ENCODE measurements at regions of chr20 and their contacts with region 1.

Region 1: DNA sequence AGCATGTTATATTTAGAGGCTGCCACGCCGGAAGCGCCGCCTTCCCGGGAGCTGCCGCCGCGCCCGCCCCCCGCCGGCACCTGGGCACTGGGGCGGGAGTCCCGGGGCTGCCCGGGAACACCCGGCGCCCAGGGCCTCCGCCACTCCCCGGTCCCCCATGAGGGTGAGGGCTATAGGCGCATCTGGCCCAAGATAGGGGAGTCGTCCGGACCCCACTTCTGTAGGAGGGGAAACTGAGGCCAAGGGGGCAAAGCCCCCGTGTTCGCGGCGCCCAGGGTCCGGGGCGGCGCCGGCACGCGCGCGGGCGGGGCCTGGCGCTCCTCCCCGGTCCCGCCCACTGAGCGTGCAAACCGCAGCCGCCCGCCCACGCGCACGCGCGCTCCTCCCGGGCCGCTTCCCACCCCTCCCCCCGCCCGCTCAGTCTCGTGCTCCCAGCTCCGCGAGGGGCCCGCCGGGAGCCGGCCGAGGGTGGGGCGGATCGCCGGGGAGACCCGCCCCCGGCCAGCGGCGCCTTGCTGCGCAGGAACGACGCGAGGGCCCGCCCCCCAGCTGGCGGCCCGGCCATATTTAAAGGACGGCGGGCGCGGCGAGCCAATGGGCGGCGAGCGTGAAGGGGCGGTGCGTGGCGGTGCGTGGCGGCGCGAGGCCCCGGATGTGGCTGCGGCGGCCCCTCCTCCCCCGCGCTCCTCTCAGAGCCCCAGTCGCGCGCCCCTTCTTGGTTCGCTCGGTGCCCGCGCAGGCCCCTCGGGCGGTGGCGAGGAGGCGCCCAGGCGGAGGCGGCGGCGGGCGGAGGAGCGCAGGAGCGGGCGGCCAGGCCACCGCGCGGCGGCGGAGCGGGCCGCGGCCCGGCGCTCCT is at the start of gene LSM14B:
- DNase-seq: peak; percentile 98
- H3K4me3 ChIP-seq: peak within 1 kb of the TSS; percentile 76 to 89 (median 87)
- H3K27ac ChIP-seq: peak within 1 kb of the TSS; percentile 91 to 98 (median 97)
- H3K4me1 ChIP-seq: peaks cover 0 to 23% (median 21%) of the 10 kb centered on the region in 4 donors
- H3K27me3 ChIP-seq: peaks cover 0 to 19% (median 0%) of the 10 kb centered on the region in 3 donors
- CTCF ChIP-seq: no peak
- EP300 ChIP-seq: peak in 1 of 4 donors; percentile 25
- POLR2A ChIP-seq: no peak
- total RNA-seq, gene LSM14B: 20.8 to 28.5 (median 23.6) TPM

Region 2: DNA sequence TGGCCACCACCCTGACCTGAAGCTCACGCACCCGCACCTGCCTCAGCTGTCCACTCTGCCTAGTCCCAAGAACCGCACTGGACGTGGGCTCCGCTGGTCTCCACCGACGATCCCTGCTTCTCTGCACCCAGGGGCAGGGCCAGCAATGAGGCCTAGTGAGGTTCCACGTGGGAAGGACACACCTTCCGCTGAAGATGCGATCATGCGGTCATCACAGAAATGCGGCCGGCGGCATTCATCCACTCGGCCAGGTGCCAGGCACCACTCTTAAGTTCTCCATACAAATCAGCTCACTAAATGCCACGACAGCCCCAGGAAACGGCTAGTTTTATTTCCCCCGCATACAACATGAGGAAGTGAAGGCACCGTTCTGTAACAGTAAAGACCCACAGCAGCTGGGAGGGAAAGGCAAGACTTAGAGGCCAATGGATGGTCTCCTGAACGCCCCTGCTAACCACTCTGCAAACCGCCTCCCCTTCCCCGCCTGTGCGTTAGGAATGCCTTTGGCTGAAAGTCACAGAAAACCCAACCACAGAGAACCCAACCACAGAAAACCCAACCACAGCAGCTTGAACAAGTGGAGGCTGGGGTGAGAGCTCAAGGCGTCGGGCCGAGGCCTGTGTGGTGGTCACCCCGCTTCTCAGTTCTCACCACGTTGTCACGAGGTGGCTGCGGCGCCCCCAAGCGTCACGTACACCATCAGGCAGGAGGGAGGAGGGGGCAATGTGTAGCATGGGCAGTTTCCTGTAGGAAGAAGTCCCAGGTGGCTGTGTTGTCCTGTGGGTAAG is 260.8 kb before region 1 on chr20:
- intact Hi-C with region 1: no loop called
- DNase-seq: no peak
- H3K4me3 ChIP-seq: no peak overlapping the region
- H3K27ac ChIP-seq: no peak overlapping the region
- H3K4me1 ChIP-seq: no peaks in the 10 kb centered on the region
- H3K27me3 ChIP-seq: peaks cover 0 to 14% (median 0%) of the 10 kb centered on the region in 3 donors
- CTCF ChIP-seq: no peak
- EP300 ChIP-seq: no peak
- POLR2A ChIP-seq: no peak

Region 3: DNA sequence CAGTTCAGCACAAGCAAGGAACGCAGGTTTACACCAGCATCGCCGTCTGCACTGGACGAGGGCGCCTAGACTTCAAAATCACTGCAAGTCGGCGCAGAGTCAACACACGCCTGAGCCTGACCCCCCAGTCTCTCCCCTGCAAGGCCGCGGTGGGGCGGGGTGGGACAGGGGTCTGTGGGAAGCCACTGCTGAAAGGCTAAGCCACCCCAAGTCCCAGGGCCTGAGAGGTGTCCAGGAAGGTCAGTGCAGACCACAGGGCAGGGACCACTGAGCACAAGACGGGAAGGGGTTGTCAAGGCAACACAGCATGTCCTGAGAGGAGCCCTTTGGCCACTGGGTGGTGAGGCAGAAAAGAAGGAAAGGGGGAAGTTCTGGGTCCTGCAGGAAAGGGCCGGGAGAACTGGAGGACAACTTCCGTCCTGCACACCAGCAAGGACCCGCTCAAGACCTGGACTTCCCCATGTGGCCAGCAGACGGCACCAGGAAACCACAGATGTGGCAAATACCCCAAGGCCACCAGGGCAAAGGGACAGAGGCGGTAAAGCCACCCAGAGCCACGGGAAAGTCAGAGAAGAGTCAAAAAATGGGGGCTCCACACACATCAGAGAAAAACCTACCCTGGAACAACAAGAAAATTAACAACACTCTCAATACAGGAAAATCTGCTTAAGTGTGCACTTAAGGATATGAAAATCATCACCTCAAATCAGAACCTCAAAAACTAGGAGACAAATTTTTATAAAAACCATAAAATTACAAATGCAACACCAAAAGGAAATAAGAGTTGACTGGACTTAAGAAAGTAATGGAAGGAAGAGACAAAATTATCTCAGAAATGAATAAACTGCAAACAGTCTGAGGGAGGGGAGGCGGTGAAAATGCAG is 141.1 kb before region 1 on chr20:
- intact Hi-C with region 1: no loop called
- DNase-seq: no peak
- H3K4me3 ChIP-seq: no peak overlapping the region
- H3K27ac ChIP-seq: no peak overlapping the region
- H3K4me1 ChIP-seq: no peaks in the 10 kb centered on the region
- H3K27me3 ChIP-seq: no peaks in the 10 kb centered on the region
- CTCF ChIP-seq: no peak
- EP300 ChIP-seq: no peak
- POLR2A ChIP-seq: no peak

Region 4: DNA sequence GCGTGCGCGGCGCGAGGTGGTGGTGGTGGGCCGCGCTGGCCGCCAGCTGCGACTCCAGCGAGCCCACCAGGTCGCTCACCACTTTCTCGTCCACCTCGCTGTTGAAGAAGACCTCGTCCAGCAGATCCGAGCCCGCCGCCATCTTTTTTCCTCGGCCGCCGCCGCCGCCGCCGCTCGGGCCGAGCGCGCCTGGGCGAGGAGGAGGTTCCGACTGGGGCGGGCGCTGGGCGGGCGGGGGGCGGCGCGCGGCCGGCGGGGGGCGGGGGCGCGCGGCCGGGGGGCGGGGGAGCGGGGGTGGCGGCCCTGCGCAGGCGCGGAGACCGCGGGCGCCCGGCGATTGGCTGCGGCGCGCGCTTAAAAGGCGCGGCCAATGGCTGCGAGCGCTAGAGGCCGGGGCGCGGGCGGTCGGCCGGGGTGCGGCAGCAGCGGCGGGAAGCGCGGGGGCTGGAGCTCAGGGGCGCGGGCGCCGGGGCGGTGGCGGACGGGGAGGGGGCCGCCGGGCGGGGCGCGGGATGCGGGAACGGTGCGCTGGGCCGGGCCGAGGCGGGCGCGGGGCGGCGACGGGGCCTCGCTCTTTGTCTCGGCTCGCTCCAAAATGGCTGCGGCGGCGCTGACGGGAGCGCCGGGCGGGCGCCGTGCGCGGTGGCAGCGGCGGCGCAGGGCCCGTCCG is 56.2 kb before region 1 on chr20 and contains the start of gene TAF4:
- intact Hi-C with region 1: loop called (anchors 1 kb)
- DNase-seq: peak; percentile 87
- H3K4me3 ChIP-seq: peak within 1 kb of the TSS; percentile 51 to 73 (median 72)
- H3K27ac ChIP-seq: peak within 1 kb of the TSS; percentile 85 to 91 (median 88)
- H3K4me1 ChIP-seq: peaks cover 0 to 59% (median 49%) of the 10 kb centered on the region in 4 donors
- H3K27me3 ChIP-seq: no peaks in the 10 kb centered on the region
- CTCF ChIP-seq: no peak
- EP300 ChIP-seq: no peak
- POLR2A ChIP-seq: no peak
- total RNA-seq, gene TAF4: 8.0 to 13.3 (median 10.9) TPM

Measured in sigmoid colon (tissue), 7 donors.